Activated CD8-positive, alpha-beta T cell treated with anti-CD3 and anti-CD28 coated beads, Interleukin-2, amount 10 ng/mL, durations not matched to agents 7 days and 5 days (primary cell): ENCODE measurements at regions of chr5 and their contacts with region 1.

Region 1: GRCh38 chr5:76771705-76772405 is 47.0 kb upstream of the F2RL1 start:
- DNase-seq: no peak
- ATAC-seq: no peak
- H3K4me3 Mint-ChIP-seq: no peak overlapping the region
- H3K27ac Mint-ChIP-seq: no peak overlapping the region
- H3K4me1 Mint-ChIP-seq: peaks cover 4% of the 10 kb centered on the region
- H3K27me3 Mint-ChIP-seq: no peaks in the 10 kb centered on the region

Region 2: GRCh38 chr5:76402886-76403765 is 368.7 kb before region 1 on chr5 and contains the start of gene IQGAP2:
- CTCF ChIA-PET with region 1: interaction called, 11 read pairs
- POLR2A ChIA-PET with region 1: no interaction called
- DNase-seq: peak; percentile 91
- ATAC-seq: peak; percentile 63
- H3K4me3 Mint-ChIP-seq: peak within 1 kb of the TSS; percentile 89
- H3K27ac Mint-ChIP-seq: peak within 1 kb of the TSS; percentile 98
- H3K4me1 Mint-ChIP-seq: peaks cover 57% of the 10 kb centered on the region
- H3K27me3 Mint-ChIP-seq: peaks cover 4% of the 10 kb centered on the region
- total RNA-seq, gene IQGAP2: 62.7 to 72.1 TPM

Region 3: DNA sequence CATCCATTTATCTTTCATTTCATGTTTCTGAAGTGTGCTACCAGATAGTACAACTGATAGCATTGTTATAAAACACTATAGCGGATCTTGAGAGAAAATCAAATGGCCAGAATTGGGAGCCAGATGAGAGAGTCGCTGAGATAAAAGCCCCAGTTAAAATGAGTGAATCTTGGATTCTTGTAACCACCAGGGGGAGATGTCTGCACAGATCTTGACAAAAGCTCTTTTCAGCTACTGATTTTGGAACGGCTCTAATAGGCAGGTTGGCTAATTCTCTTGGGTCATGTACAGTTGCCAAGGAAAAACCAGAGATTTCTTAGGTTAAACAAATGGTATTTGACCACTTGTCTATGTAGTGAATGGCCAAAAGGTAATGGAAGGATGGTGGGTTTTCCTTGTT is 170.4 kb before region 1 on chr5:
- CTCF ChIA-PET with region 1: interaction called, 110 read pairs
- POLR2A ChIA-PET with region 1: no interaction called
- DNase-seq: peak; percentile 50
- ATAC-seq: peak; percentile 64
- H3K4me3 Mint-ChIP-seq: no peak overlapping the region
- H3K27ac Mint-ChIP-seq: no peak overlapping the region
- H3K4me1 Mint-ChIP-seq: no peaks in the 10 kb centered on the region
- H3K27me3 Mint-ChIP-seq: no peaks in the 10 kb centered on the region

Region 4: DNA sequence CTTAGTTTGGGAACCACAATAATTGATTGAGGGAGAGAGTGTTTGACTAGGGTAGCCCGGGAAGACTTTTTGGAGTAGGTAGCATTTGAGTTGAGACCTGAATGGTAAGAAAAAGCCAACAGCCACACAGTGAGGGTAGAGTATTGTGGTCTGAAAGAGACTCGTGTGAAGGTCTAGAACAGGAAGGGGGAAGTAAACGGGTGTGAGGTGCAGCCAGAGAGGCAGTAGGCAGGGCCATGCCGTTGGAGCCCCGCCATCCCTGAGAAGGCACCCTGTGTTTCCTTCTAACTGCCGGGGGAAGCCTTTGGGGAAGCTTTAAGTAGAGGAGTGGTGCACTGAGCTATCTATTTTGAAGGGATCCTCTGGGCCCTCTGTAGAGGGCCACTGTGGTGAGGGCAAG is 145.1 kb before region 1 on chr5:
- CTCF ChIA-PET with region 1: interaction called, 11 read pairs
- POLR2A ChIA-PET with region 1: no interaction called
- DNase-seq: peak; percentile 34
- ATAC-seq: peak; percentile 81
- H3K4me3 Mint-ChIP-seq: no peak overlapping the region
- H3K27ac Mint-ChIP-seq: peak overlapping the region; percentile 23
- H3K4me1 Mint-ChIP-seq: peaks cover 24% of the 10 kb centered on the region
- H3K27me3 Mint-ChIP-seq: no peaks in the 10 kb centered on the region

Region 5: DNA sequence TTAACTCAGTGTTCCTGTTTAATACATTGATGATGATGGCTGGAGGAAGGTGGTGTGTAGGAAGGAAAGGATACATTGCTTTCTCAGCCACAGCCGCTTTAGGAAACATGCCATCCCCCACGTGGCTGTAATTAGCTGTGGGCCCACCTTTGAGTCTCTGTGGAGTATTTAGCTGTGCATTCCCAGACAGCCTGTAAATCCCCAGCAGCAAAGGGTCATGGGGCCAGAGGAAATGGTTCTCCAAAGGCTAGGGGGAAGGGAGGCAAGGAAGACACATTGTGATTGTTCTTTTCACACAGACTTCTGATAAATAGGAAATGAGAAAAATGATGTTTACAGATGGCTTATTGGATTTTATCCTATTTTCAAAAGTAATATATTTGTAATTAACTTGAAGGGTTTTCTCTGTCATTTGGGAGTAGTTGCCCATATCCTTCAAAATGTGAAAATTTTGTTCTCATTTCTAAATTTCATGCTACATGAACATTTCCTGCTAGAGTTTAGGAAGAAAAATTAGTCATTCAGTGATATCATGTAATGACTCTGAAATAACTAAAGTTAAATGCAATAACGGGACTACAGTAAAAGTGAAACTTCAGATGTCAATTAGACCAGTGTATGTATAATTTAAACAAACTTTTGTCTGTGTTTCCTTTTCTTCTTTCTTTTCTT is 80.3 kb before region 1 on chr5:
- CTCF ChIA-PET with region 1: interaction called, 12 read pairs
- POLR2A ChIA-PET with region 1: no interaction called
- DNase-seq: no peak
- ATAC-seq: no peak
- H3K4me3 Mint-ChIP-seq: no peak overlapping the region
- H3K27ac Mint-ChIP-seq: no peak overlapping the region
- H3K4me1 Mint-ChIP-seq: peaks cover 4% of the 10 kb centered on the region
- H3K27me3 Mint-ChIP-seq: no peaks in the 10 kb centered on the region

Region 6: GRCh38 chr5:76723906-76724305 is 47.9 kb before region 1 on chr5:
- CTCF ChIA-PET with region 1: interaction called, 14 read pairs
- POLR2A ChIA-PET with region 1: no interaction called
- DNase-seq: no peak
- ATAC-seq: no peak
- H3K4me3 Mint-ChIP-seq: no peak overlapping the region
- H3K27ac Mint-ChIP-seq: no peak overlapping the region
- H3K4me1 Mint-ChIP-seq: peaks cover 11% of the 10 kb centered on the region
- H3K27me3 Mint-ChIP-seq: peaks cover 9% of the 10 kb centered on the region

Region 7: GRCh38 chr5:76782444-76782843 is 10.6 kb after region 1 on chr5:
- CTCF ChIA-PET with region 1: interaction called, 18 read pairs
- POLR2A ChIA-PET with region 1: no interaction called
- DNase-seq: no peak
- ATAC-seq: no peak
- H3K4me3 Mint-ChIP-seq: no peak overlapping the region
- H3K27ac Mint-ChIP-seq: no peak overlapping the region
- H3K4me1 Mint-ChIP-seq: no peaks in the 10 kb centered on the region
- H3K27me3 Mint-ChIP-seq: peaks cover 2% of the 10 kb centered on the region